H1 (cell line): ENCODE measurements at regions of chr1 and their contacts with region 1.

Region 1: DNA sequence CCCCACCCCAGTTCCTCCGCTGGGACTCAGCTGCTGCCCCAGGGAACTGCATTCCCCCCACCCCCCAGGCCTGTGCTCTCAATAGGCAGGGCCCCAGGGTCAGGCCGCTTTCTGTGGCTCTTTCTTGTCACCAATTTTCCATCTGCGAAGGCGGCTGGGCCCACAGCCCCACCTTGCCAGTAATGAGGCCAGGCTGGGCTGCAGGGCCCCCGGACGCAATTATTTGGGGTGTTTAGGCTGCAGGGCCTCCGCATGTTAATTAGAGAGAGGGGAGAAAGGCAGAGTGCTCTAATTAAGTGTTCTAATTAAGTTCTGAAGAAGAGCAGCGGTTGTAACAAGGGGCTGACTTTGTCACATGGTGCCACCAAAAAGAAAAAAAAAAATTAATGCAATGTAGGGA is 71.8 kb downstream of the EPHB2 start:
- DNase-seq: no peak
- H3K4me3 ChIP-seq: no peak overlapping the region
- H3K27ac ChIP-seq: no peak overlapping the region
- H3K4me1 ChIP-seq: peaks cover 0 to 10% (median 4%) of the 10 kb centered on the region in 4 experiments; a peak in 3 of 7 replicates
- H3K27me3 ChIP-seq: no peaks in the 10 kb centered on the region
- CTCF ChIP-seq: no peak
- EP300 ChIP-seq: no peak
- POLR2A ChIP-seq: no peak
- RAD21 ChIP-seq: no peak

Region 2: GRCh38 chr1:22592919-22593790 is 189.3 kb before region 1 on chr1:
- CTCF ChIA-PET with region 1: no interaction called
- POLR2A ChIA-PET with region 1: no interaction called
- DNase-seq: peak in 1 of 2 experiments; percentile 76
- H3K4me3 ChIP-seq: peak overlapping the region in 1 of 4 experiments; percentile 41; a peak in 3 of 8 replicates
- H3K27ac ChIP-seq: no peak overlapping the region
- H3K4me1 ChIP-seq: peaks cover 0 to 10% (median 2%) of the 10 kb centered on the region in 4 experiments; a peak in 3 of 7 replicates
- H3K27me3 ChIP-seq: no peaks in the 10 kb centered on the region
- CTCF ChIP-seq: no peak
- EP300 ChIP-seq: 0 out of 3 replicates have a peak, but pooled peaks of 1 of the 2 experiments have one; percentile 28
- POLR2A ChIP-seq: no peak
- RAD21 ChIP-seq: no peak

Region 3: GRCh38 chr1:22739648-22740385 is 42.6 kb before region 1 on chr1:
- CTCF ChIA-PET with region 1: no interaction called
- POLR2A ChIA-PET with region 1: no interaction called
- DNase-seq: no peak
- H3K4me3 ChIP-seq: no peak overlapping the region
- H3K27ac ChIP-seq: no peak overlapping the region
- H3K4me1 ChIP-seq: peaks cover 0 to 7% (median 0%) of the 10 kb centered on the region in 4 experiments; a peak in 4 of 7 replicates
- H3K27me3 ChIP-seq: no peaks in the 10 kb centered on the region
- CTCF ChIP-seq: no peak
- EP300 ChIP-seq: no peak
- POLR2A ChIP-seq: no peak
- RAD21 ChIP-seq: no peak

Region 4: DNA sequence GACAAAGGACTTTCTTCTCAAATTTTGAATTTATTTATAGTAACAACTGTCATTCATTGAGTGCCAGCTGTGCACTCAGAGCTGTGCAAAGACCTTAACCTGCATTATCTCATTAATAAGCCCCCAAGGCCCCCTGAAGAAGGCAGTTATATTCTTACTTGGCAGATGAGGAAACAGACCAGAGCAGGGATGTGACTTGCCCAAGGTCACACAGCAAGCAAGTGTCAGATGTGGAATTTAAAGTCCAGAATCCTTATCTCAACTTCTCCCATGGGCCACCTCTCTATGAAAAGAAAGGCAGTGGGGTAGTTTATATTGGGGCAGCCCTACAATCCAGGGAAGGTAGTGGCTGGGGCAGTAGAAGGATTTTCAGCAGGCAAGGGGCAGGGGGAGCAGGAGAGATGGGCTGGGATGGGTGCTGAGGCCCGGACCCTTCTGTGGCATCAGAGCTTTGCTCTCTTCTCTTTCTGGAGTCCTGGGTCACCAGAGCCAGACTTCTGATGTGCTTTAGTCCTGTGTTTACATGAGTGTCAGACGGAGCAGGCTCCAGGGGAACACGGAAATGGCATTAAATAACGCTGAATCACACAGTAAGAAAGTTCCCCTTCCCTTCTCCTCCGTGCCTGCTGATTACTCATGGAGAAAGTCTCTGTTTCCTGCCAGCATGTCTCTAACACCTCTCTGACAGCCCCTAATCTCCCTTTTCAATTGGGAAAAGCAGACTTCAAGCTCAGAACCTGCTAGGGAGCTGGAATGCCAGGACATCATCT is 32.3 kb before region 1 on chr1:
- CTCF ChIA-PET with region 1: no interaction called
- POLR2A ChIA-PET with region 1: no interaction called
- DNase-seq: no peak
- H3K4me3 ChIP-seq: no peak overlapping the region
- H3K27ac ChIP-seq: no peak overlapping the region
- H3K4me1 ChIP-seq: peaks cover 0 to 5% (median 1%) of the 10 kb centered on the region in 4 experiments; a peak in 2 of 7 replicates
- H3K27me3 ChIP-seq: no peaks in the 10 kb centered on the region
- CTCF ChIP-seq: no peak
- EP300 ChIP-seq: no peak
- POLR2A ChIP-seq: no peak
- RAD21 ChIP-seq: no peak

Region 5: DNA sequence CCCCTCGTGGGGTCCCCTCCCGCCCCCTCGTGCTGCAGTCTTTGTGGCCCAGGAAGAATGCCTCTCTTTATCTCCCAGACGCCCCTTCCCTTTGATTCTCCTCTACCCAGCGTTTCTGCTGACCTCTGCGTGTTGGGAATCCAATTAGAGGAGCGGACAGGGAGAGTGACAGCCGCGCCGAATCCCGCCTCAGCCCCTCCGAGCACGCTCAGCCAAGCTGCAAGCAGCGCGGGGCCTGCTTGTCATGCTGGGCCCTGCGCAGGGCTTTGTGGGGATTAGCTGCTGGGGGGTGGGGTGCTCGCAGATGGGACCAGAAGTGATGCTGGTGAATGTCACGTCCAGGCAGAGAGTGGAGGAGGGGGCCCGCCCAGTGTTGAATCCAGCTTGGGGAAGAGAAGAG is 19.4 kb after region 1 on chr1:
- CTCF ChIA-PET with region 1: interaction called, 15 read pairs
- POLR2A ChIA-PET with region 1: interaction called, 5 read pairs
- DNase-seq: peak in 1 of 2 experiments; percentile 65
- H3K4me3 ChIP-seq: no peak overlapping the region
- H3K27ac ChIP-seq: no peak overlapping the region
- H3K4me1 ChIP-seq: peaks cover 9 to 45% (median 22%) of the 10 kb centered on the region in 4 experiments
- H3K27me3 ChIP-seq: no peaks in the 10 kb centered on the region
- CTCF ChIP-seq: no peak
- EP300 ChIP-seq: no peak
- POLR2A ChIP-seq: no peak
- RAD21 ChIP-seq: no peak